ENCODE measurements at regions of chr10 and their contacts with region 1.

Region 1: DNA sequence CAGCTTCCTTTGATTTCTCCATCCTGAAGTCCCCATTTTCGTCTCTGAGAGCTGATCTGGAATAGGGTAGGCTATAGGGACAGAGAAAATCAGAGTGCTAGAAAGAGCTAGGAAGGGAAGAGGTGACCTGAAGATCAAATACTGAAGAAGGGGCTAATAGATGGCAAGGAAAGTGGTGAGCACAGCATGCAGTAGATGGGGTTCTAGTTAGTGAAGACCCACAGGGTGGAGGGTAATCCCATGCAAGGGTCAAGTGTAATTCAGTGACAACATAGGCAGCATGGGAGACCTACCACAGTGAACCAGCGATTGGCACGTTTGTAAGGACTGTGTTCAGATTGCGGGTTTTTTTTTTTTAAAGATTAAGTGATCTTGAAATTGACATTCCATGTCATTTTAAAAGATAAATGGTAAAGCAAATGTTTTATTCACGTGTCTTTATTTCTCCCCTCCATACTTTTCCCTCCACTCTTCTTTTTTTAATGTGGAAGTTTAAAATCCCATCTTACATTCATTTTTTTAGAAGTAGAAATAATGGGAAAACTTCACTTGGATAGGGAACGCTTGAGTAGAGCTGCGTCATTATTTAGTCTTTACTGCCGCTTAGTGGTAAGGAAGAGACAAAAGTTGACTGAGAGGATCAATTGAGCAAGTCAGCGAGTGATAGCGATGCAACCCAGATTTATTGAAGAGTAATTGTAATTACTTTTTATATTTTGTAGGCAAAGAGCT is 21.0 kb upstream of the ABI1 start:
- DNase-seq: no peak
- ATAC-seq: peak; percentile 70

Region 2: GRCh38 chr10:26579256-26580077 is 302.3 kb before region 1 on chr10:
- intact Hi-C with region 1: no loop called
- DNase-seq: peak; percentile 55
- ATAC-seq: no peak

Region 3: GRCh38 chr10:26612151-26612915 is 269.4 kb before region 1 on chr10:
- intact Hi-C with region 1: loop called (anchors 10 kb)
- DNase-seq: no peak
- ATAC-seq: no peak

Region 4: GRCh38 chr10:26682931-26683330 is 198.8 kb before region 1 on chr10:
- intact Hi-C with region 1: loop called (anchors 5 kb)
- DNase-seq: no peak
- ATAC-seq: no peak

Region 5: GRCh38 chr10:26725837-26726727 is 155.7 kb before region 1 on chr10:
- intact Hi-C with region 1: loop called (anchors 2 kb)
- DNase-seq: peak; percentile 85
- ATAC-seq: peak; percentile 60

Region 6: DNA sequence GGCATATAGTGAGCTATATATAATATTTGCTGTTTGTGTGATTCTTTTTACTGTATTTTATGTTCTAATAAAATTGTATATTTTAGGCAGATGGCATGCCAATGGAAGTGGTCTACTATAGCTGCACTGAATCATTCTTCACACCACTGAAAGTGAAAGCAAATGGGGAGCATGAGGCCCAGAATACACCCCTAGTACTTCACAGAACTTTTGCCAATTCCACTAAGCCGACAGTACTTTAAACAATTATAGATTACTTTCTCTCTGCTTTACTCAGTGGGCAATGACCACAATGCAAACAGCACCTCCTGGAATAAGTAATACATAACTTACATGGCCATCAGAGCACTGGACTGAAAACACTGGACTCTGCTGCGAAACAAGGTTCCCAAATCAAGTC is 148.3 kb after region 1 on chr10:
- intact Hi-C with region 1: no loop called
- DNase-seq: no peak
- ATAC-seq: no peak

Measured in Right ventricle myocardium inferior (tissue), 1 donor.